BJ (cell line): ENCODE measurements at regions of chr22 and their contacts with region 1.

Region 1: GRCh38 chr22:33302049-33302545 is 243.9 kb upstream of the SYN3 start:
- DNase-seq: peak; percentile 4
- H3K4me3 ChIP-seq: no peak overlapping the region
- H3K27me3 ChIP-seq: no peaks in the 10 kb centered on the region
- CTCF ChIP-seq: peak; percentile 100

Region 2: GRCh38 chr22:33240888-33241475 is 61.1 kb before region 1 on chr22:
- CTCF ChIA-PET with region 1: no interaction called
- POLR2A ChIA-PET with region 1: no interaction called
- DNase-seq: no peak
- H3K4me3 ChIP-seq: no peak overlapping the region
- H3K27me3 ChIP-seq: no peaks in the 10 kb centered on the region
- CTCF ChIP-seq: no peak

Region 3: GRCh38 chr22:33288078-33288477 is 14.0 kb before region 1 on chr22:
- CTCF ChIA-PET with region 1: interaction called, 24 read pairs
- POLR2A ChIA-PET with region 1: no interaction called
- DNase-seq: no peak
- H3K4me3 ChIP-seq: no peak overlapping the region
- H3K27me3 ChIP-seq: no peaks in the 10 kb centered on the region
- CTCF ChIP-seq: no peak

Region 4: GRCh38 chr22:33467620-33468095 is 165.6 kb after region 1 on chr22:
- CTCF ChIA-PET with region 1: interaction called, 66 read pairs
- POLR2A ChIA-PET with region 1: no interaction called
- DNase-seq: no peak
- H3K4me3 ChIP-seq: no peak overlapping the region
- H3K27me3 ChIP-seq: no peaks in the 10 kb centered on the region
- CTCF ChIP-seq: peak; percentile 49

Region 5: GRCh38 chr22:33579448-33580093 is 277.5 kb after region 1 on chr22:
- CTCF ChIA-PET with region 1: interaction called, 42 read pairs
- POLR2A ChIA-PET with region 1: no interaction called
- DNase-seq: no peak
- H3K4me3 ChIP-seq: no peak overlapping the region
- H3K27me3 ChIP-seq: no peaks in the 10 kb centered on the region
- CTCF ChIP-seq: peak; percentile 95